Endothelial cell of umbilical vein (primary cell): ENCODE measurements at regions of chr6 and their contacts with region 1.

Region 1: GRCh38 chr6:22025468-22026160 is 271.2 kb downstream of the PRL start:
- DNase-seq: peak; percentile 95
- H3K4me3 ChIP-seq: no peak overlapping the region
- H3K27ac ChIP-seq: peak overlapping the region; percentile 86
- H3K4me1 ChIP-seq: peaks cover 16% of the 10 kb centered on the region
- H3K27me3 ChIP-seq: no peaks in the 10 kb centered on the region
- CTCF ChIP-seq: no peak
- POLR2A ChIP-seq: no peak

Region 2: DNA sequence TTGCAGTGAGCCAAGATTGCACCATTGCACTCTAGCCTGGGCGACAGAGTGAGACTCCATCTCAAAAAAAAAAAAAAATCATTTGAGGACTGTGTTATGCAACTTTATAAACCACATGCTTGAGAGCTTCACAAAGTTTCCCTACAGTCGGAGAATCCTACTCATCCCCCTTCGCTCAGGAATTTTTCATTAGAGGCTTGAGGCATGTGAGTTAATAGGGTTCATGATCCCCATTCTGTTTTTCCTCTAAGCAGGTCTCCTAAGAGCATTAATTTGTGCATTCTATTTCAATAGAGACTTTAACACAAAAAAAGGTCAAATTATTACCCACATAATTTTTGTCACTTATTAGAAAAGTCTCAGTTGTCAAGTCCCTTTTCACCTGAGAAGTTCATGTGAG is 535.8 kb before region 1 on chr6:
- CTCF ChIA-PET with region 1: no interaction called
- POLR2A ChIA-PET with region 1: no interaction called
- dilution Hi-C with region 1: no loop called
- intact Hi-C with region 1: no loop called
- DNase-seq: no peak
- H3K4me3 ChIP-seq: no peak overlapping the region
- H3K27ac ChIP-seq: no peak overlapping the region
- H3K4me1 ChIP-seq: no peaks in the 10 kb centered on the region
- H3K27me3 ChIP-seq: peaks cover 0 to 2% of the 10 kb centered on the region in 2 experiments
- CTCF ChIP-seq: no peak
- POLR2A ChIP-seq: no peak

Region 3: GRCh38 chr6:21953831-21954801 is 71.5 kb before region 1 on chr6:
- CTCF ChIA-PET with region 1: interaction called, 3 read pairs
- POLR2A ChIA-PET with region 1: no interaction called
- dilution Hi-C with region 1: no loop called
- intact Hi-C with region 1: loop called (anchors 5 kb)
- DNase-seq: peak; percentile 98
- H3K4me3 ChIP-seq: no peak overlapping the region
- H3K27ac ChIP-seq: peak overlapping the region; percentile 70
- H3K4me1 ChIP-seq: peaks cover 37% of the 10 kb centered on the region
- H3K27me3 ChIP-seq: no peaks in the 10 kb centered on the region
- CTCF ChIP-seq: no peak
- POLR2A ChIP-seq: no peak

Region 4: DNA sequence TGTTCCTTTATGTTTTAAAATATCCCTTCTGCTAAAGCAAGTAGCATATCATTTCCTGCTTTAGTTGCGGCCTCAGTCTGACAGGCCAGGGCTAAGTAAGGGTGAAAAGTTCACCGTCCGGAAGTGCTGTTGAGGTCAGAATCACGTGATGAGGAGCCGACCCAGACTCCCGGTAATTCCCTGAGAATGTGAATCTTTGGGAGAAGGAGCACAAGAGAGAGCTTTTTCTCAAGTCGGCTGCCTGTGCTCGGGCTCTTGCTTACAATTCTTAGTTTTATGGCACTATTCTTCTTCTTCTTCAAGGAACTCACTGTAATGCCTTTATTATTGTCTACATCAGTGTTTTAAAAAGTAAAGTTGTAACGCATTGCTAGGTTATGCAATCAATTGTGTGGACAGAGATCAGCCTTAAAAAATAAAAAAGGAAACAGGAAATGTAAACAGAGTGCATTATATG is 38.1 kb before region 1 on chr6:
- CTCF ChIA-PET with region 1: no interaction called
- POLR2A ChIA-PET with region 1: no interaction called
- dilution Hi-C with region 1: no loop called
- intact Hi-C with region 1: loop called (anchors 1 kb)
- DNase-seq: peak; percentile 96
- H3K4me3 ChIP-seq: peak overlapping the region in 1 of 3 experiments; percentile 26
- H3K27ac ChIP-seq: peak overlapping the region; percentile 88
- H3K4me1 ChIP-seq: peaks cover 33% of the 10 kb centered on the region
- H3K27me3 ChIP-seq: no peaks in the 10 kb centered on the region
- CTCF ChIP-seq: no peak
- POLR2A ChIP-seq: peak; percentile 21

Region 5: DNA sequence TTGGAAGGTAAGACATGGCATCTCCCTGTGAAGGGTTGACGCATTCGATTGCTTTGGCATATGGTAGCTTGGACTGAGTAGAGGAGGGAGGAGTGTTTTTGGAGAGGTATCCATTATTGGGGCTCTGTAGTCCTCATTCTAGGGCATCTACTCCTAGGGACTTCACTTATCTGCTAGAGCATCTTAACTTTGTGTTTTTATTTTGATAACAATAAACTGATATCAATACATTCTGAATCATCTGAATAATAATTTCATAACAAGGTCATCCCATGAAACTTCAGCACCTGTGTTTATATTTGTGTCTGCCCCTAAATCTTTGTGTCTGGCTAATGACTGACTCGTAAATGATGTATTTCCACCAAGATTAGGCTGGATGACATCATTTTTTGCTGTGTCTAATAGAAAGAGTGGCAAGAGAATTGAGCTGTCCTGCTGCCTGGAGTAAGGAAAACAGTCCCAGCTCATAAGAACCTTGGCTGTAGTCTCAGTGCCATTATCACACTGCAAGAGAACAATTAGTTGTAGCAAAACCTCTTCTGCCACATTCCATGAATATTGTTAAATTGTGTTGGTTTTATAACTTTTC is 17.3 kb before region 1 on chr6:
- CTCF ChIA-PET with region 1: interaction called, 3 read pairs
- POLR2A ChIA-PET with region 1: no interaction called
- dilution Hi-C with region 1: no loop called
- intact Hi-C with region 1: loop called (anchors 1 kb)
- DNase-seq: peak; percentile 71
- H3K4me3 ChIP-seq: no peak overlapping the region
- H3K27ac ChIP-seq: peak overlapping the region; percentile 17
- H3K4me1 ChIP-seq: peaks cover 7% of the 10 kb centered on the region
- H3K27me3 ChIP-seq: no peaks in the 10 kb centered on the region
- CTCF ChIP-seq: no peak
- POLR2A ChIP-seq: no peak